Naive thymus-derived CD4-positive, alpha-beta T cell (primary cell): ENCODE measurements at regions of chr15 and their contacts with region 1.

Region 1: DNA sequence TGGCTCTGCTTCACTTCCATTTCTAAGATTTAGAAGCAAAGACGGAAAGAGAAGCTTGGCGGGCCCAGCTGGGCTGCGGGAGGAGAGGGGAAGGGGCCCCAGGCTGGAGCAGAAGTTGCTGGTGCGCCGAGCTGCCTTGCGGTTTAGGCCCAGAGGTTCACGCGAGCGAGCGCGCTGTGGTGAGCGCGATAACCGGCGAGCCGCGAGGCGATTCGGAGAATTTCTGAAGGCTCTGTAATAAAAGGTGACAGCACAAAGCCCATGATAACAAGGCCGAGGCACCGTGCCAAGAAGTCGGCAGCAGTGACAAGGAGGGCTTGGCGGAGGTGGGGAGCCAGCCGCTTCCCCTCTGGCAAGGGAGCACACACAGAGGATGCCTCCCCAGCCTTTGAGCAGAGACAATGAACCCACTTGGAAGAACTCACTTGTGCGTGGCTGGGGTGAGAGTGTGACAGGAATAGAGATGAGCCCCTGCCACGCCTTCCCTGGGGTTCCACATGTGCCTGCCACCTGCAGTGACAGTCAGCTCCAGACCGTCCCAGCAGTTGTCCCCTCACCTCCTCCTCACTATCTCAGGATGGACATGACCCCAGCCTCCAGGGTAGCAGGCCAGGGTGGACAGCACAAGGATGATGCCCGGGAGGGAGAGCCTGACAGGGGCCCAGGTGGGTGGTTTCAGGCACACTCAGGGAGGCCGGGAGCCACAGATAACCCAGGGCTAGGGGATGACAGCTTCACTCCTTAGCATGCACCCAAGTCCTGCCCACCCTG is 315.2 kb downstream of the UACA start:
- DNase-seq: peak in 8 of 9 donors; percentile 16 to 55 (median 32)
- ATAC-seq: peak; percentile 82
- H3K4me3 ChIP-seq: peak overlapping the region; percentile 14
- H3K4me3 Mint-ChIP-seq: peak overlapping the region; percentile 53 to 81 (median 75)
- H3K27ac ChIP-seq: peak overlapping the region; percentile 2
- H3K27ac Mint-ChIP-seq: peak overlapping the region; percentile 39 to 87 (median 65)
- H3K4me1 ChIP-seq: peaks cover 21 to 39% of the 10 kb centered on the region in 2 donors
- H3K4me1 Mint-ChIP-seq: peaks cover 43 to 55% (median 51%) of the 10 kb centered on the region in 7 donors
- H3K27me3 ChIP-seq: no peaks in the 10 kb centered on the region
- H3K27me3 Mint-ChIP-seq: peaks cover 0 to 77% (median 11%) of the 10 kb centered on the region in 5 donors

Region 2: DNA sequence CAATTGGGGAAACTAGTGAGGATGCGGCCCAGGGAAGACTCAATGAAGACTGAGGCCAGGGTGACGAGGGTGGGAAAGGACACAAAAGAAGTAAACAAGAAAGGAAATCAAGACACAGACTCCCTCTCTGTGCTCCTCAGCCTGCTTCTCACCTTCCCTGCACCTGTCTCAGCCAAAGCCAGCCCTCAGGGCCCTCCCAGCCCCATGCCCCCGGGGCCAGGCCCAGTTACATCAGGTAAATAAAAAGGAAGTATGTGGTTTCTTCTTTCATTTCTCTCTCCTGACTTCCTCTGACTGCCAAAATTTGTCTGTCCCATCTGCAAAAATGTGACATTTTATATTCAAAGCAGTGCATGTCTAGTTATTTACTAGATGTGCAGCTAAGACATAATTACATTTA is 12.7 kb before region 1 on chr15:
- CTCF ChIA-PET with region 1: no interaction called
- POLR2A ChIA-PET with region 1: interaction called, 3 read pairs
- intact Hi-C with region 1: loop called in 1 of 2 experiments (anchors 2 kb)
- DNase-seq: peak in 4 of 9 donors; percentile 27 to 34 (median 32)
- ATAC-seq: peak; percentile 45
- H3K4me3 ChIP-seq: no peak overlapping the region
- H3K4me3 Mint-ChIP-seq: peak overlapping the region; percentile 30 to 63 (median 50)
- H3K27ac ChIP-seq: no peak overlapping the region
- H3K27ac Mint-ChIP-seq: peak overlapping the region in 8 of 9 donors; percentile 2 to 83 (median 58)
- H3K4me1 ChIP-seq: peaks cover 0 to 25% of the 10 kb centered on the region in 2 donors
- H3K4me1 Mint-ChIP-seq: peaks cover 27 to 48% (median 34%) of the 10 kb centered on the region in 7 donors
- H3K27me3 ChIP-seq: no peaks in the 10 kb centered on the region
- H3K27me3 Mint-ChIP-seq: peaks cover 0 to 20% (median 0%) of the 10 kb centered on the region in 5 donors

Region 3: DNA sequence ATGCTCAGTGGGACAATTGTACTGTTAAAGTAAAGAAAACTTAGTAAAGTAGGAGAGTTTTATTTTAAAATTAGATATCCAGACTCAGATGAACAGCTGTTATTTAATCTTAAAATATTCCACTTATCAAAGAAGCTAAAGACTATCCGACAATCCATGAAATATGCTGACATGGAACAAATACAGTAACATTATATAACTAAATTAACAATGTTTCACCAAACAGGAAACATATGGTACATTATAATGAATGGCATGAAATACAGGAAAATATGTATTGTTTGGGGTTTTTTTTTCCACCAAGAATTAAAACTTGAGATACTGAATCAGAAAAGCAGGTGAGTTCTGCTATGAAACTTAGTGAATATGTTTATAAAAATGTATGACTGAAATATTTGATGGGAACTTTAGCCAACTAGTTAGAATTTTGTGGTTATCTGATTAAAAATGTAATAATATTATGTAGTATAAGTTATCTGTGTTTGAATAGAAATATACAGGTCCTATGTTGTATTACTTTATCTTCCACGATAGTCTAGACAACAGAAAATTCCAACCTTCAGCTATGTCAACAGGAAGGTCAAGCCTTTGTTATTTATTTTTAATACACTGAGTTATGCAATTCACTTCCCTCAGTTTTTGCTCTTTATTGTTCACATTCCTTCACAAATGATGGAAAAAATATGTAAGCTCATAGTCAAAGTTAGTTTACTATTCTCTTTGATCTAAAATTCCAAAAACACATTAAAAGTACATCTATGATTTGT is 242.6 kb after region 1 on chr15:
- CTCF ChIA-PET with region 1: no interaction called
- POLR2A ChIA-PET with region 1: no interaction called
- intact Hi-C with region 1: no loop called
- DNase-seq: no peak
- ATAC-seq: no peak
- H3K4me3 ChIP-seq: no peak overlapping the region
- H3K4me3 Mint-ChIP-seq: no peak overlapping the region
- H3K27ac ChIP-seq: no peak overlapping the region
- H3K27ac Mint-ChIP-seq: no peak overlapping the region
- H3K4me1 ChIP-seq: no peaks in the 10 kb centered on the region
- H3K4me1 Mint-ChIP-seq: peaks cover 0 to 3% (median 0%) of the 10 kb centered on the region in 7 donors
- H3K27me3 ChIP-seq: no peaks in the 10 kb centered on the region
- H3K27me3 Mint-ChIP-seq: peaks cover 0 to 43% (median 8%) of the 10 kb centered on the region in 5 donors